Right cardiac atrium (tissue), 5 donors: ENCODE measurements at regions of chr6 and their contacts with region 1.

Region 1: DNA sequence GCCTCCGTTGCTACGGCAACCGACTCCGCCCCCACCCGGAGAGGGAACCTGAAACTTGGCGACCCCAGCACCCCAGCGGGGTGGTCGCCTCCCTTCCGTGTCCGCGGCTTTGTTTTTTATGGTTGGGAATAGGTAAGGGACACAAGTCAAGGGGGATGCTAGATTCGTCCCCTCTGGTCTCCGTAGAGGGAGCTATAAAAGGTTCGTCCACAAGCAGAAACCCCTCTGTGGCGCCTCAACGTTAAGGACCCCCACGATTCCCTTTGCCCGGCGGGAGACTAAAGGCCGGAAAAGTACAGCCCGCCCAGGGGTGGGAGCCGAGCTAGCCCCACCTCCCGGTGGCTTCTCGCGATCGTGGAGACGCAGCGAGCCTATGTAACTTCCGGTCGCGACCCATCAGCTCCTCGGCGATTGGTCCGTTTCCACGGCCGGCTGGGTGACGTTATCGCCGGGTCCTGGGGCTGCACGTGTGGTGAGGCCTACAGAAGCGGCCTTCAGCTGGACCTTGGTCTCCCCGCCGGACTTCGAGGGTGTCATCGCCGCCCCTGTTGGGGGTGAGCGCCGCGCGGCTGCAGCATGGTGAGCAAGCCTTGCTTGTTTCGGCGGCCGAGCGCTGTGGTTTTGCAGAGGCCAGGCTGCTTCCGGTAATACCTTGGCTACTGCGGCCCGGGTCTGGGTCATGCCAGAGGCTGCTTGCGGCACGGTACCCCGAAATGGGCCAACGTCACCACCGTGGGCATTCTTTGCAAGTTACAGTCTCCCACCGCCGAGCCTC is at the start of gene LTV1:
- DNase-seq: peak; percentile 97 to 99 (median 98)
- ATAC-seq: peak; percentile 100
- H3K4me3 ChIP-seq: peak within 1 kb of the TSS; percentile 80
- H3K27ac ChIP-seq: peak within 1 kb of the TSS; percentile 80
- H3K4me1 ChIP-seq: peaks cover 2% of the 10 kb centered on the region
- H3K27me3 ChIP-seq: no peaks in the 10 kb centered on the region
- total RNA-seq, gene LTV1: 12.5 to 15.9 (median 12.8) TPM

Region 2: DNA sequence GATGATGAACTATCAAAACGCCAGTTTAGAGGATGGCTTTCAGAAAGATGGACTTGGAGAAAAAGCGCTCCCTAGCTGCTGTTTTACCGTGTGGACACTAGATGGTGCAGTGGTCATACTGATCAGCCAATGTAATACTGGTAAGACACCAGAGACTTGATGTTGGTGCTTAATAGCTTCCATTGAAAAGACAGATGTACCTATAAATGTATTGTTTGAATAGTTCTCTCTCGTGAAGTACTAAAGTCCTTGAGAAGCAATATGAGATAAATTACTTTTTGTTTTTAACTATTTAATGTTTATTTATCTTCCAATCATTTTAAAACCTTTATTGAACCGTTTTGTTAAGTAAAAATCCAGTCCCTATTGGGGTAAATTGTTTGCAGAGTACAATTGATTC is 267.6 kb before region 1 on chr6:
- intact Hi-C with region 1: loop called in 2 of 4 experiments (anchors 5 to 10 kb)
- DNase-seq: no peak
- ATAC-seq: peak; percentile 81 to 88
- H3K4me3 ChIP-seq: no peak overlapping the region
- H3K27ac ChIP-seq: no peak overlapping the region
- H3K4me1 ChIP-seq: no peaks in the 10 kb centered on the region
- H3K27me3 ChIP-seq: no peaks in the 10 kb centered on the region

Region 3: GRCh38 chr6:143592335-143592734 is 250.8 kb before region 1 on chr6:
- intact Hi-C with region 1: loop called in 1 of 4 experiments (anchors 10 kb)
- DNase-seq: no peak
- ATAC-seq: no peak
- H3K4me3 ChIP-seq: no peak overlapping the region
- H3K27ac ChIP-seq: no peak overlapping the region
- H3K4me1 ChIP-seq: no peaks in the 10 kb centered on the region
- H3K27me3 ChIP-seq: no peaks in the 10 kb centered on the region

Region 4: DNA sequence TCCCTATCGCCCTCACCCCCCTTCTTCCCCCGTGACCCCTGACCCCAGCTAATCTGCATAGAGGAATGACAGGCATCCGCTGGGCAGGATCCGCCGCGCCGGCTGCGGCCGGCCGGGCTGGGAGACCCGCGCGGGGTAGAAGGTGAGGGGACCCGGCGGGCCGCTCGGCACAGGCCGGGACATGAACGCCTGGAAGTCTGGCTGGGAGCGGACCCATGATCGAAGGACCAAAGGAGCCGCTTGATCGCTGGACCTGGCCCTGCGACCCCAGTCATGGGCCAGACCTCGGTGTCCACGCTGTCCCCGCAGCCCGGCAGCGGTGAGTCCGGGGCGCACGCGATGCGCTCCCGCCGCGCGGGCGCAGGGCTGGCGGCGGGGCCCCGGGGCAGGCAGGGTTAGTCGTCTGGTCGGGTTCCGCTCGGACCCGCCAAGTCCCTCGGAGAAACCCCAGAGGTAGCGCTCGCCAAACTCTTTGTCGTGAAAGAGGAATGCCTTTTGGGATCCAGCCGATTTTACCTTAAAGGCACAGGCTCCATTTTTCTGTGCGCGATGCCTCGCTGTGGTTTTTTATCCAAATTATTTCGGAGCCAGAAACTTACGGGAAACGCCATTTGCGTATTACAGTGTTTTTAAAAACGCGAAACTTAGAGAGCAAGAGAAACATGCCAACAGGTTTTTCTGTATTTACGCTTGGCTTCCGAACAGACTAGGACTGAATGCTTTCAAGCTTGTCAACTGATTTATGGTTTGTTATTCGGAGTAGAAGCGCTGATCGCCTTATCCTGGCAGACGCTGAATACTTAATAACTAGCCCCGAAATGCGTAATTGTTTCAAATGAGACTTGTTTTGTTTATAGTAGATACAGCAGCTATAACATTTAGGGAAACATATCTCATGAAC is 164.9 kb before region 1 on chr6 and contains the start of gene PHACTR2:
- intact Hi-C with region 1: loop called in 2 of 4 experiments (anchors 5 to 10 kb)
- DNase-seq: peak; percentile 84 to 93 (median 92)
- ATAC-seq: peak; percentile 95
- H3K4me3 ChIP-seq: peak within 1 kb of the TSS; percentile 95
- H3K27ac ChIP-seq: peak within 1 kb of the TSS; percentile 100
- H3K4me1 ChIP-seq: peaks cover 4% of the 10 kb centered on the region
- H3K27me3 ChIP-seq: no peaks in the 10 kb centered on the region
- total RNA-seq, gene PHACTR2: 47.3 to 75.7 (median 59.9) TPM

Region 5: DNA sequence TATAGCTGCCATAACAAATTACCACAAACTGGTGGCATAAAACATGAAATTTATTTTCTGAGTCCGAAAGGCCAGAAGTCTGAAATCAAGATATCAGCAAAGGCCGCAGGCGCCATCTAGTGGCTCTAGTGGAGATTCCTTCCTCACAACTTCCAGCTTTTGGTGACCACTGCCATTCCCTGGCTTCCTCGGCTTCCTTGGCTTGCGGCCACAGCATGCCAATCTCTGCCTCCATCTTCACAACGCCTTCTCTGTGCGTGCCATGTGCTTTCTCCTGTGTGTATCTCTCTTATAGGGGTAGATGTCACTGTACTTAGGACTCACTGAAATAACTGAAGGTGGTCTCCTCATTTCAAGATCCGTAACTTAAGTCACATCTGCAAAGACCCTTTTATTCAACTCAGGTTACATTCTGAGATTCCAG is 170.4 kb after region 1 on chr6:
- intact Hi-C with region 1: loop called in 1 of 4 experiments (anchors 10 kb)
- DNase-seq: peak; percentile 81 to 90 (median 87)
- ATAC-seq: peak in 1 of 2 donors; percentile 62
- H3K4me3 ChIP-seq: no peak overlapping the region
- H3K27ac ChIP-seq: no peak overlapping the region
- H3K4me1 ChIP-seq: no peaks in the 10 kb centered on the region
- H3K27me3 ChIP-seq: no peaks in the 10 kb centered on the region

Region 6: DNA sequence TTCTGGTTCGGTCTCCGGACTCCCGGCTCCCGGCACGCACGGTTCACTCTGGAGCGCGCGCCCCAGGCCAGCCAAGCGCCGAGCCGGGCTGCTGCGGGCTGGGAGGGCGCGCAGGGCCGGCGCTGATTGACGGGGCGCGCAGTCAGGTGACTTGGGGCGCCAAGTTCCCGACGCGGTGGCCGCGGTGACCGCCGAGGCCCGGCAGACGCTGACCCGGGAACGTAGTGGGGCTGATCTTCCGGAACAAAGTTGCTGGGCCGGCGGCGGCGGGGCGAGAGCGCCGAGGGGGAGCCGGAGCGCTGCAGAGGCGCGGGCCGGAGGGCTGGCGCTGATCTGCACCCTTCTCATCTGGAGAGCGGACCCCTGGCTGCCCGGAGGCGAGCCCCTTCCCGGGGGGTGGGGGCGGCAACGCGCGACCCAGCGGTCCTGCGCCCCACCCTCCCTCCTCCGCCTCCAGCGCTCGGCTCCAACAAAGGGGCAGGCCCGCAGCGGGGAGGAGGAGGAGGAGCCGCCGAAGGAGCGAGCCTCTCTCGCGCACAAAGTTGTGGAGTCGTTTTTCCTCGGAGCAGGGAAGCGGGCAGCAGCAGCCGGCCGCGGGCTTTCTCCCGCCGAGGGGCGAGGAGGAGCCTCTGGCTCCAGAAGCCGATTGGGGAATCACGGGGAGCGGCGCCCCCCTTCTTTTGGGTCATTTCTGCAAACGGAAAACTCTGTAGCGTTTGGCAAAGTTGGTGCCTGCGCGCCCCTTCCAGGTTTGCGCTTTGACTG is 441.9 kb after region 1 on chr6 and contains the start of gene UTRN:
- intact Hi-C with region 1: no loop called
- DNase-seq: peak; percentile 87 to 94 (median 94)
- ATAC-seq: peak; percentile 86 to 87
- H3K4me3 ChIP-seq: peak within 1 kb of the TSS; percentile 97
- H3K27ac ChIP-seq: peak within 1 kb of the TSS; percentile 99
- H3K4me1 ChIP-seq: no peaks in the 10 kb centered on the region
- H3K27me3 ChIP-seq: no peaks in the 10 kb centered on the region
- total RNA-seq, gene UTRN: 55.5 to 70.5 (median 68.5) TPM